Aorta (tissue), 5 donors: ENCODE measurements at regions of chrX and their contacts with region 1.

Region 1: DNA sequence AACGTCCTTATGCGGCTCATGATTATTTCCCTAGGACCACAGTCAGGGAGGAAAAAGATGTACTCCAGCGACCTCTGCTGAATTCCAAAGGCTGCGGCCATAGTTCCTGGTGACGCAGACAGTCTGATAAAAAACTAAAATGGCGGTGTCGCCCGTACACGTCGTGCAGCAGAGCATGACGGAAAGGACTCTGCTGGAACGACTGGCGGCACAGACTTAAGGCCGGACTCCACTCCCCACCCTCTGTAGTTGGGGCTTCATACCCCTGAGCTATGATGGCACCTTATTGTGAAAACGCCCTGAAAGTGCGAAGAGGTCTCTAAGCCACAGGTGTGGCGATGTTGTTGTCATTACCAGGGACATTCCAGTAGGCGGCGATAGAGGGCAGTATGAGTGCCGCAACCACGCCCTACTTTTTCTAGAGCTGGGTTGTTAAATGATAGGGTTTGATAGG is 90.0 kb upstream of the EDA2R start:
- DNase-seq: peak; percentile 64 to 72
- ATAC-seq: peak; percentile 80
- H3K4me3 ChIP-seq: peak overlapping the region; percentile 11 to 41
- H3K27ac ChIP-seq: no peak overlapping the region
- H3K4me1 ChIP-seq: no peaks in the 10 kb centered on the region
- H3K27me3 ChIP-seq: no peaks in the 10 kb centered on the region

Region 2: DNA sequence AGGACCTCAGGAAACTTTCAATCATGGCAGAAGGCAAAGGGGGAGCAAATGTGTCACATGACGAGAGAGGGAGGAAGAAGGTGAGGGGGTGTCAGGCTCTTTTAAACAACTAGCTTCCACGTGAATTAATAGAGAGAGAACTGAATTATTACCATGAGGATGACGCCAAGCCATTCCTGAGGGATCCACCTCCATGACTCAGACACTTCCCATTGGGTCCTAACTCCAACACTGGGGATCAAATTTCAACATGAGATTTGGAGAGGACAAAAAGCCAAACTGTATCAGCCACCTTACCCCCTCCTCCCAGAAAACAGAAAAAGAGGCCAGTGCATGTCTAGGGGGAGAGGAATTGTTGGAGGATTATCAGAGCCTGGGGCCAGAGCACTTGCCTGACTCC is 1153.8 kb before region 1 on chrX:
- intact Hi-C with region 1: loop called in 1 of 2 experiments (anchors 10 kb)
- DNase-seq: no peak
- ATAC-seq: no peak
- H3K4me3 ChIP-seq: no peak overlapping the region
- H3K27ac ChIP-seq: no peak overlapping the region
- H3K4me1 ChIP-seq: no peaks in the 10 kb centered on the region
- H3K27me3 ChIP-seq: no peaks in the 10 kb centered on the region

Region 3: DNA sequence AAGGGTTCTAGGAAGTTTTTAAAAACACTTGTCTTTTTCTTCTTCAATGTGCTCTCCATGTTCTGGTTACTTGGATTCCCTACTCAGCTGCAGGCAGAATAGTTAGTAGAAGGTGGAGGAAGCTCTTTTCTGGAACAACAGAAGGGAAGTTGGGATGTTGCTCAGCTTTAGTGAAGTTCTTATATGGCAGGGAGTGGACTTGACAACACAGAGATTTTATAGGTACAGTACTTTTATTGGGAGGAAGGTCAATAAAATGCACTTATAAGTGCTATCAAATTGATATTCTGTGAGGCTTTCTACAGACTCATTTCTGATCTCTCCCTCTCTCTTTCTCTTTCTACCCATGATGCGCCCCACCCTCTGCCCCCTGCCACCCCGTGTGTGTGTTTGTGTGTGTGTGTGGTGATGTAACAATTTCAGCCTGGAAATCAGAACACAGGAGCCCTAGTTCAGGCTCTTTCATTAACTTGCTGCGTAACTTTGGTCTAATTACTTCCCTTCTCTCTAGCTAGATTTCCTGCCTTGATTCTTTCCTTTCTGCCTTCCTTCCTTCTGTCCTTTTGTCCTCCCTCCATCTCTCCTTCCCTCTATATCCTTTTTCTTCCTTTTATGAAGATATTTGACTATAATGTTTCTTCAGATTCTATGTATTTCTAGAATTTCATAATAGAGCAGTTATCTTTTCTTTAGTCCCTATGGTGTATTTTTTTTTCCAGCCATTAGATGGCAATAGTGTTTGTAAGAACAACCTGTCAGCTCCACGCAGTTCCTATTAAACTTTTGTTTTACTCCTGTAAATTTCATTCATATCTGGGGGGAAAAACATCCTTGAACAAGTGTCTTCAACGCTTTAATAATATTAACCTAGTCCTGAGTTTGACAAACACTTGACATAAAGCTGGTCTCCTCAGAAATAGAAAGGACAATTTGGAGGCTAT is 527.7 kb before region 1 on chrX:
- intact Hi-C with region 1: loop called (anchors 2 to 5 kb)
- DNase-seq: no peak
- ATAC-seq: no peak
- H3K4me3 ChIP-seq: no peak overlapping the region
- H3K27ac ChIP-seq: no peak overlapping the region
- H3K4me1 ChIP-seq: no peaks in the 10 kb centered on the region
- H3K27me3 ChIP-seq: no peaks in the 10 kb centered on the region

Region 4: DNA sequence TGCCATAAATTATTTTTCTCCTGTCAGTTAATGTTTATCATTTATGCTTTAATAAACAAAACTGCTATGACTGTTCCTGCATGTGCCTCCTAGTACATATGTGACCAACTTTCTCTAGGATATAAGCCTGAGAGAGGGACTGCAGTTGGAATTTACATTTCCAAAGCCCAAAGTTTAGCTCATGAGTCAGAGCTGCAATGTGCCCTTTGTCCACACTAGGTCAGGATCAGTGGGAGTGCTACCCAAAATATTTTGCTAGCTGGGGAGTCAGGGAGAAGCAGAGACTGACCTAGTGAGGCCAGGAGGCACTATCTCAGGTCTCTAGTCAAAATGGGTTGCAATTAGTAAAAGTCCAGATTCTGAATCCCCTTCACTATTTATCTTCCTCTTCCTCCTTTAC is 907.7 kb after region 1 on chrX:
- intact Hi-C with region 1: no loop called
- DNase-seq: no peak
- ATAC-seq: no peak
- H3K4me3 ChIP-seq: no peak overlapping the region
- H3K27ac ChIP-seq: no peak overlapping the region
- H3K4me1 ChIP-seq: no peaks in the 10 kb centered on the region
- H3K27me3 ChIP-seq: no peaks in the 10 kb centered on the region